ENCODE measurements at regions of chr5 and their contacts with region 1.

Region 1: GRCh38 chr5:176447982-176448608 is at the start of gene FAF2:
- DNase-seq: peak; percentile 95 to 96
- ATAC-seq: peak; percentile 98 to 100 (median 99)
- H3K4me3 ChIP-seq: peak within 1 kb of the TSS; percentile 70 to 96 (median 90)
- H3K27ac ChIP-seq: peak within 1 kb of the TSS; percentile 76 to 98 (median 95)
- H3K4me1 ChIP-seq: peaks cover 7 to 44% (median 33%) of the 10 kb centered on the region in 9 donors
- H3K27me3 ChIP-seq: no peaks in the 10 kb centered on the region
- CTCF ChIP-seq: peak; percentile 97 to 100 (median 99)
- total RNA-seq, gene FAF2: 12.8 to 19.9 (median 14.9) TPM

Region 2: GRCh38 chr5:176361437-176362232 is 86.5 kb before region 1 on chr5 and contains the start of gene KIAA1191:
- intact Hi-C with region 1: loop called in 1 of 10 experiments (anchors 5 kb)
- DNase-seq: peak; percentile 96 to 97
- ATAC-seq: peak; percentile 94 to 98 (median 98)
- H3K4me3 ChIP-seq: peak within 1 kb of the TSS; percentile 58 to 100 (median 95)
- H3K27ac ChIP-seq: peak within 1 kb of the TSS in 9 of 10 donors; percentile 60 to 94 (median 86)
- H3K4me1 ChIP-seq: peaks cover 0 to 39% (median 28%) of the 10 kb centered on the region in 9 donors
- H3K27me3 ChIP-seq: peaks cover 0 to 21% (median 0%) of the 10 kb centered on the region in 7 donors
- CTCF ChIP-seq: peak in 6 of 9 donors; percentile 8 to 58 (median 40)
- total RNA-seq, gene KIAA1191: 74.9 to 121 (median 91.9) TPM

Region 3: DNA sequence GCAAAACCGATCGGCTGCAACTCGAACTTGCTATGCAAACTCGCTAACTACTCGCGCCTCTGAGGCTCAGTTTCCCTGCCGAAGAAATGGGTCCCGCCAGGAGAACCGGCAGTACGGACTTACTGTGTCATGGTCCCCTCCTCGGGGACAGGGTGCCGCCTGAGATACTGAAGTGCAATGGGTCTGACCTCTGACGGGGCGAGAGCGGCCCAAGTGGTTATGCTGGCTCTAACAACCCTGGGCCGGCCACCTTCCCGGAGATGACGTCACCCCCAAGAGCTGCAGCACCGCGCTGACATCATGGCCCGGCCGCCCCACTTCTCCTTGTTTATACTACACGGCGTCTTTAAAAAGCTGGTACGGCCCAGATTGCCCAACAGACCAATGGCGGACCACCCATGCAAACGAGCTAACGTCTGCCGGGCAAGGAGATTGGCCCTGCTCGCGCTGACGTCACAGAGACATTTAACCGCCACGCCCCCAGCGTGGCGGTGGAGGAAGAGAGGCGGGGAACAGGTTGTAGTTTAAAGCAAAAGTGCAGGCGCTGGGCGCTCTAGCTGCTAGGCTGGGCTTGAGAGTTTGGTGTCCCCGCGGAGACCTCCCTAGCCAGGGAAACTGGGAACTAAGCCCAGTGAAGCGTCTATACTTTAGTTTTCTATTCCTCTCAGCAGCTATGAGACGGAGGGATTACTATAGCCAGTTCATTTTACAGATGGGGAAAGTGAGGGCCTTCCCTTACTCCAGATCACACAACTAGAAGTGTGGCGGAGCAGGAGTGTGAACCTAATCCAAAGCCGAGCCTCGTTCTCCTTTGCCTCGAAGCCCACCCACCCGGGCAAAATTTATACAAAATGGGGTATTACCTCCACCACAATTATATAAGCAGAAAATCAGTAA is 89.8 kb after region 1 on chr5:
- intact Hi-C with region 1: loop called in 6 of 10 experiments (anchors 2 to 5 kb)
- DNase-seq: peak; percentile 97 to 99
- ATAC-seq: peak; percentile 84 to 94 (median 90)
- H3K4me3 ChIP-seq: peak overlapping the region; percentile 51 to 96 (median 84)
- H3K27ac ChIP-seq: peak overlapping the region; percentile 90 to 100 (median 97)
- H3K4me1 ChIP-seq: peaks cover 19 to 81% (median 65%) of the 10 kb centered on the region in 9 donors
- H3K27me3 ChIP-seq: no peaks in the 10 kb centered on the region
- CTCF ChIP-seq: no peak

Region 4: GRCh38 chr5:176543428-176544173 is 95.5 kb after region 1 on chr5:
- intact Hi-C with region 1: loop called in 4 of 10 experiments (anchors 5 kb)
- DNase-seq: peak; percentile 71 to 82
- ATAC-seq: peak; percentile 83 to 94 (median 89)
- H3K4me3 ChIP-seq: peak overlapping the region; percentile 55 to 85 (median 71)
- H3K27ac ChIP-seq: peak overlapping the region; percentile 73 to 94 (median 90)
- H3K4me1 ChIP-seq: peaks cover 0 to 55% (median 30%) of the 10 kb centered on the region in 9 donors
- H3K27me3 ChIP-seq: no peaks in the 10 kb centered on the region
- CTCF ChIP-seq: no peak

Region 5: DNA sequence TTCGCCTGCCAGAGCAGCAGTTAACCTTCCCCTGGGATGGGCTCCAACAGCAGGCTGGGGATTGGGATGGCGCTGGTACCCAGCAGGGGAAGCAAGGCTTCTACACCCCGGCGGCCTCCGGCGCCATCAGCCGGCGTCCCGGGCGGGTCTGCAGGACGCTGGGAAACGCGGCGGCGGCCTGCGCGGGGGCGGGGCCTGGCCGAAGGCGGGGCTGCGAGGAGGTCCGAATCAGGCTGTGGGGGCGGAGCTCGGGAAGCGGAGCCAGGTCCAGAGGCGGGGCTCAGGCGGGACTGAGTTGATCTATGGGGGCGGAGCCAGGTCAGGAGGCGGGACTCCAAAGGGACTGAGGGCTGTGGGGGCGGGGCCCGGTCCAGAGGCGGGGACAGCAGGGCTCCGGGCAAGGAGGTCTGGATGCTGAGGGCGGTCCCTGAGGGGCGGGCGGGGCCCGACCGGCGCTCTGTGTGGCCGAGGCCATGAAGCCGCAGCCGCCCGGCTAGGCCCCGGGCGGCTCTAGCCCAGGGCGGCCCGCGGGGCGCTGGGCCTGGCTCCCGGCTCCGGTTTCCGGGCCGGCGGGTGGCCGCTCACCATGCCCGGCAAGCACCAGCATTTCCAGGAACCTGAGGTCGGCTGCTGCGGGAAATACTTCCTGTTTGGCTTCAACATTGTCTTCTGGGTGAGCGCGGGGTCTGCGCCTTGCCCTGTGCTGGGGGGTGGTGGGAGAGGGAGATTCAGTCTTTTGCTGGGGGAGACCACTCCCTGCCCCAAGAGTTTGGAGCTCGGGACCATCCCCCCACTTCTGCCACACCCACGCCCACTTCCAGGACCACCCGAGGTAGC is 199.2 kb after region 1 on chr5 and contains the start of gene TSPAN17:
- intact Hi-C with region 1: loop called in 1 of 10 experiments (anchors 5 kb)
- DNase-seq: peak; percentile 100
- ATAC-seq: peak; percentile 97 to 99 (median 98)
- H3K4me3 ChIP-seq: peak within 1 kb of the TSS; percentile 51 to 90 (median 79)
- H3K27ac ChIP-seq: peak within 1 kb of the TSS; percentile 25 to 92 (median 80)
- H3K4me1 ChIP-seq: peaks cover 10 to 29% (median 20%) of the 10 kb centered on the region in 9 donors
- H3K27me3 ChIP-seq: no peaks in the 10 kb centered on the region
- CTCF ChIP-seq: peak in 7 of 9 donors; percentile 29 to 70 (median 40)
- total RNA-seq, gene TSPAN17: 20.8 to 48.3 (median 27.3) TPM

Region 6: GRCh38 chr5:176725521-176726280 is 277.6 kb after region 1 on chr5:
- intact Hi-C with region 1: no loop called
- DNase-seq: no peak
- ATAC-seq: no peak
- H3K4me3 ChIP-seq: no peak overlapping the region
- H3K27ac ChIP-seq: no peak overlapping the region
- H3K4me1 ChIP-seq: no peaks in the 10 kb centered on the region
- H3K27me3 ChIP-seq: peaks cover 0 to 87% (median 66%) of the 10 kb centered on the region in 7 donors
- CTCF ChIP-seq: no peak

Measured in heart right ventricle (tissue), 16 donors.